PC-3 (cell line): ENCODE measurements at regions of chr7 and their contacts with region 1.

Region 1: GRCh38 chr7:18570890-18571478 is 75.4 kb downstream of the HDAC9 start:
- DNase-seq: peak; percentile 78
- ATAC-seq: peak; percentile 84
- H3K4me3 ChIP-seq: no peak overlapping the region
- H3K27ac ChIP-seq: no peak overlapping the region
- H3K4me1 ChIP-seq: peaks cover 14% of the 10 kb centered on the region; the same call in 1 of the 2 replicates
- H3K27me3 ChIP-seq: no peaks in the 10 kb centered on the region
- CTCF ChIP-seq: peak; percentile 76

Region 2: GRCh38 chr7:17680943-17681351 is 890.0 kb before region 1 on chr7:
- CTCF ChIA-PET with region 1: no interaction called
- POLR2A ChIA-PET with region 1: no interaction called
- intact Hi-C with region 1: loop called (anchors 5 kb)
- DNase-seq: peak; percentile 79
- ATAC-seq: peak; percentile 29
- H3K4me3 ChIP-seq: peak overlapping the region; percentile 47; the same call in 1 of the 2 replicates
- H3K27ac ChIP-seq: peak overlapping the region; percentile 72
- H3K4me1 ChIP-seq: peaks cover 49% of the 10 kb centered on the region
- H3K27me3 ChIP-seq: no peaks in the 10 kb centered on the region
- CTCF ChIP-seq: peak; percentile 79

Region 3: GRCh38 chr7:18357691-18358090 is 213.3 kb before region 1 on chr7:
- CTCF ChIA-PET with region 1: interaction called, 12 read pairs
- POLR2A ChIA-PET with region 1: no interaction called
- intact Hi-C with region 1: loop called (anchors 1 kb)
- DNase-seq: peak; percentile 53
- ATAC-seq: peak; percentile 52
- H3K4me3 ChIP-seq: no peak overlapping the region
- H3K27ac ChIP-seq: no peak overlapping the region
- H3K4me1 ChIP-seq: peaks cover 11% of the 10 kb centered on the region
- H3K27me3 ChIP-seq: no peaks in the 10 kb centered on the region
- CTCF ChIP-seq: peak; percentile 57

Region 4: GRCh38 chr7:18508443-18509427 is 62.2 kb before region 1 on chr7:
- CTCF ChIA-PET with region 1: interaction called, 5 read pairs
- POLR2A ChIA-PET with region 1: interaction called, 3 read pairs
- intact Hi-C with region 1: loop called (anchors 2 kb)
- DNase-seq: peak; percentile 92
- ATAC-seq: peak; percentile 92
- H3K4me3 ChIP-seq: peak overlapping the region; percentile 73
- H3K27ac ChIP-seq: peak overlapping the region; percentile 99
- H3K4me1 ChIP-seq: peaks cover 38% of the 10 kb centered on the region
- H3K27me3 ChIP-seq: no peaks in the 10 kb centered on the region
- CTCF ChIP-seq: no peak

Region 5: DNA sequence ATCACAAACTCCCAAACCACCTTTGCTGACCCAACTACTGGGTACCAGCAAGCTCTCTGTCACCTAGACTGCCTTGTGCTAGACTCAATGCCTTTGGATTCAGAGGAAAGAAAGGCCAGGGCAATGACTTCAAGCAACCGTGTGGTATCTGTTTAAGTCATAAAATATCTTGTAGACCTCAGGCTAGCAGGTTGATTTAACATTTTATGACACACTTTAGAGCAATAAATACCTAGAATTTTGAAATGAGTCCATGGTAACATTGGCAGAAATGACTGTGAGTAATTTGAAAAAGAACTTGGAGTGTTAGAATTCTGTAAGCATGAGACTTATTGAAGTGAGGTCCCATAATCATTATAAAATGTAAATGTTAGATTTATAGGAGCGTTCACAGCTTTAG is 459.3 kb after region 1 on chr7:
- CTCF ChIA-PET with region 1: no interaction called
- POLR2A ChIA-PET with region 1: no interaction called
- intact Hi-C with region 1: no loop called
- DNase-seq: peak; percentile 6
- ATAC-seq: peak; percentile 58
- H3K4me3 ChIP-seq: no peak overlapping the region
- H3K27ac ChIP-seq: no peak overlapping the region
- H3K4me1 ChIP-seq: peaks cover 4% of the 10 kb centered on the region; the same call in 1 of the 2 replicates
- H3K27me3 ChIP-seq: no peaks in the 10 kb centered on the region
- CTCF ChIP-seq: no peak